SK-N-SH (cell line): ENCODE measurements at regions of chr9 and their contacts with region 1.

Region 1: DNA sequence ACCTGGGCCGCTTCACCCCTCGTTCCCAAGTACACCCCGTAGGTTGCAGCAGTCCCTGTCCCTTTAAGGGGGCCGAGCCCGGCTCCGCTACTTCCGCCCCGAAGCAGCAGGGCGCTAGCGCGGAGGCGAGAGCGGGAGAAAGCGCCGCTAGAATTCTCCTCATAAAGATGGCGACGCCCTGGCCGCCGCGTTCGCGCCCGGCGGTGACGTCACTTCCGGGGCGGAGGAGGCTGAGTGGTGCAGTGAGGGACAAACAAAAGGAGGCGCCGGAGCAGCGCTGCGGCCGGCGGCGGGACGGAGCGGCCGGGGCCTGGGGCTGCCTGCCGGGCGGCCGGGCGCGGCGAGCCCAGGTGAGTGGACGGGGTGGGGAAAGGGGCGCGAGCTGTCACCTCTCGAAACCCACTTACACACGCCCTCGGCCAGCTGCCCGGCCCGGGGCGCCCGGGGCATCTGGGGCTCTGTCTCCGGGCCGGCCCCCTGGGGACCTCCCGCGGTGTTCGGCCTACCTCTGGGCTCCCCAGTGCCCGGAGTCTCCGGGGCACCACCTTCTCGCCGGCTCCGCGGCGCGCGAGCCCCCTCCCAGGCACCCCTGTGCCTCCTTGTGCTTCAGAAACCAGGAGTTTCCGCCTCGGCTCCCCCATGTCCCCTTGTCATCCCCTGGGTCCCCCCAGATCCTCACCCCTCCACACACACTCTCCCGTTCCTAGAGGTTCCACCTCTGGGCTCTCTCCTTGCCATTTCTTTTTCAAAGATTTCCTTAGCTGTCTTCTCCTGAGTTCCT is at the starts of genes KYAT1 and LRRC8A:
- DNase-seq: peak; percentile 95
- H3K4me3 ChIP-seq: peak within 1 kb of the TSS; percentile 87 to 100
- H3K27ac ChIP-seq: peak within 1 kb of the TSS; percentile 76 to 81
- H3K4me1 ChIP-seq: peaks cover 10 to 16% of the 10 kb centered on the region in 2 experiments; a peak in 2 of 4 replicates
- H3K27me3 ChIP-seq: no peaks in the 10 kb centered on the region
- CTCF ChIP-seq: no peak
- EP300 ChIP-seq: no peak
- RAD21 ChIP-seq: no peak
- polyA plus RNA-seq, gene KYAT1: 9.4 and 13.3 TPM in 2 replicates
- polyA plus RNA-seq, gene LRRC8A: 28.6 and 30.4 TPM in 2 replicates

Region 2: GRCh38 chr9:128523199-128523925 is 358.7 kb before region 1 on chr9:
- CTCF ChIA-PET with region 1: no interaction called
- POLR2A ChIA-PET with region 1: no interaction called
- DNase-seq: peak; percentile 87
- H3K4me3 ChIP-seq: no peak overlapping the region
- H3K27ac ChIP-seq: peak overlapping the region; percentile 51 to 87
- H3K4me1 ChIP-seq: peaks cover 8 to 9% of the 10 kb centered on the region in 2 experiments; a peak in 3 of 4 replicates
- H3K27me3 ChIP-seq: no peaks in the 10 kb centered on the region
- CTCF ChIP-seq: no peak
- EP300 ChIP-seq: no peak; a peak in 1 of 4 replicates
- RAD21 ChIP-seq: peak; percentile 9; the same call in 1 of the 2 replicates

Region 3: GRCh38 chr9:128863647-128864046 is 18.4 kb before region 1 on chr9:
- CTCF ChIA-PET with region 1: interaction called, 47 read pairs
- POLR2A ChIA-PET with region 1: no interaction called
- DNase-seq: peak; percentile 87
- H3K4me3 ChIP-seq: peak overlapping the region in 1 of 2 experiments; percentile 19; a peak in 1 of 4 replicates
- H3K27ac ChIP-seq: no peak overlapping the region
- H3K4me1 ChIP-seq: no peaks in the 10 kb centered on the region; a peak in 1 of 4 replicates
- H3K27me3 ChIP-seq: no peaks in the 10 kb centered on the region
- CTCF ChIP-seq: peak; percentile 84
- EP300 ChIP-seq: no peak
- RAD21 ChIP-seq: peak; percentile 74

Region 4: GRCh38 chr9:128937310-128938165 is 55.4 kb after region 1 on chr9:
- CTCF ChIA-PET with region 1: no interaction called
- POLR2A ChIA-PET with region 1: no interaction called
- DNase-seq: no peak
- H3K4me3 ChIP-seq: no peak overlapping the region
- H3K27ac ChIP-seq: no peak overlapping the region
- H3K4me1 ChIP-seq: peaks cover 6 to 15% of the 10 kb centered on the region in 2 experiments; a peak in 2 of 4 replicates
- H3K27me3 ChIP-seq: no peaks in the 10 kb centered on the region
- CTCF ChIP-seq: no peak
- EP300 ChIP-seq: no peak
- RAD21 ChIP-seq: no peak

Region 5: DNA sequence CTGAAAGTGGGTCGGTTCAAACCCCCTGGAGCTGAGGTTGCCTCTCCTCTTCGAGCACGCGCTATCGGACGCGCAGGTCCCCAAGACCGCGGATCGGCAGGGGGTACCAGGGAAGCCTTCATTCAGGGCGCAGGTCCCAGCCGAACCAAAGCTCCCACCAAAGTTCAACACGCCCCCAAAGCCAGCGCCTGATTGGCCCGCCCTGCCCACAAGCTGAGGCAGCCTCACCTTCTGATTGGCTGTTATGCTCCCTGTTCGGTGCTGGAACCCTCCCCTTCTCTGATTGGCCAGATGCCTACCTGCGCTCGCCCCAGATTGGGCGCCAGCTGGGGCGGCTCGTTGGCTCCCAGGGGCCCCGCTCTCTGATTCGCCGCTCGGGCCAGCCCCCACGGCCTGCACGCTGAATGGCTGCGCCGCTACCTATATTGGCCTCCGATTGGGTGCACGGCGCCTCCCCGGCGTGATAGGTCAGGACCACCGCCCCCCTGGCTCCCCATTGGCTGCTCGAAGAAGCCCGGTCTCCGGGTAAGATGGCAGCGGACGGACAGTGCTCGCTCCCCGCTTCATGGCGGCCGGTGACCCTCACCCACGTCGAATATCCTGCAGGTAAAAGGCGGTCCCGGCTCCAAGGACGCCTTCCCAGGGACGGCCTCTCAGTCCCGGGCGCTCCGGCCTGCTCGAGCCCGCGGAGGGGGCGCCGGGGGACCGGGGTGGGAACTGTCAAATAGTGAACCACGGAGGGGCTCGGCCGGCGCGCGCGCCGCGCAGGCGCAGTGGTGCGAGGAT is 198.7 kb after region 1 on chr9 and contains the start of gene DOLPP1:
- CTCF ChIA-PET with region 1: no interaction called
- POLR2A ChIA-PET with region 1: no interaction called
- DNase-seq: peak; percentile 99
- H3K4me3 ChIP-seq: peak within 1 kb of the TSS; percentile 83 to 99
- H3K27ac ChIP-seq: peak within 1 kb of the TSS; percentile 55 to 86
- H3K4me1 ChIP-seq: peaks cover 9 to 21% of the 10 kb centered on the region in 2 experiments; a peak in 2 of 4 replicates
- H3K27me3 ChIP-seq: no peaks in the 10 kb centered on the region
- CTCF ChIP-seq: no peak
- EP300 ChIP-seq: 0 out of 4 replicates have a peak, but pooled peaks of 1 of the 2 experiments have one; percentile 6
- RAD21 ChIP-seq: no peak
- polyA plus RNA-seq, gene DOLPP1: 19.9 and 20.4 TPM in 2 replicates